Activated CD4-positive, alpha-beta T cell treated with anti-CD3 and anti-CD28 coated beads for 36 hours (primary cell): ENCODE measurements at regions of chr4 and their contacts with region 1.

Region 1: DNA sequence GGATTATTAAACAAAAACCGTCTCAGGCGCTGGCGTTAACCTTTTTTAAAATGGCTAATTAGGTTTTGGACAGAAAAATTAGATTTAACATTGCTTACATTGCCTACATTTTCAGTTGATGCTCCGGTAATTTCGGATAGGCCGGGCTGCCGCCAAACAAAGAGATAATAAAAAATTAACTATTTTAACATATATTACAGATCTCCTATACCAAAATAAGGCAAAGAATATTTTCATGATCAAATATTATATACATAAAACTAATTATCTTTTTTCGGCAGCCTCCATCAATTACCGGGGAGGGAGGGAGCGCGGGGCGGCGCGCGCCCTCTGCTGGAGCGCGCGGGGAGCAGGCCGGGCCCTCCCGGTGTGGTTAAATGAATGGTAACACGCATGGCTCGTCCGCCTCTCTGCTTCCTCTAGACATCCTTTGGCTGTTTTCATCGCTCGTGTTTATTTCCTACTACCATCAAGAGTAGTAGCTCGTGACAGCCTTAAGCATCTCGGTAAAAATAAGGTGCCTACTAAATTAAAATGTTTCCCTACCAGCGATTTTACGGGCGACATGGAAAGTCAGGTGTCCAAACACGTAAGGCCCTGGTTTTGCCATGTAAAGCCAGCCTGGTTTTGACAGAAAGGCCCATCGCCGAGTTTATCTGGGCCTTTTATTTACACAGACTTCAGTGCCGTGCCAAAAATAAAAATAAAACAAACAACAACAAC is 52.4 kb upstream of the TMEM33 start:
- DNase-seq: peak; percentile 75
- ATAC-seq: peak; percentile 95
- H3K4me3 Mint-ChIP-seq: peak overlapping the region; percentile 43
- H3K27ac Mint-ChIP-seq: no peak overlapping the region
- H3K4me1 Mint-ChIP-seq: peaks cover 19% of the 10 kb centered on the region
- H3K27me3 Mint-ChIP-seq: peaks cover 47% of the 10 kb centered on the region

Region 2: DNA sequence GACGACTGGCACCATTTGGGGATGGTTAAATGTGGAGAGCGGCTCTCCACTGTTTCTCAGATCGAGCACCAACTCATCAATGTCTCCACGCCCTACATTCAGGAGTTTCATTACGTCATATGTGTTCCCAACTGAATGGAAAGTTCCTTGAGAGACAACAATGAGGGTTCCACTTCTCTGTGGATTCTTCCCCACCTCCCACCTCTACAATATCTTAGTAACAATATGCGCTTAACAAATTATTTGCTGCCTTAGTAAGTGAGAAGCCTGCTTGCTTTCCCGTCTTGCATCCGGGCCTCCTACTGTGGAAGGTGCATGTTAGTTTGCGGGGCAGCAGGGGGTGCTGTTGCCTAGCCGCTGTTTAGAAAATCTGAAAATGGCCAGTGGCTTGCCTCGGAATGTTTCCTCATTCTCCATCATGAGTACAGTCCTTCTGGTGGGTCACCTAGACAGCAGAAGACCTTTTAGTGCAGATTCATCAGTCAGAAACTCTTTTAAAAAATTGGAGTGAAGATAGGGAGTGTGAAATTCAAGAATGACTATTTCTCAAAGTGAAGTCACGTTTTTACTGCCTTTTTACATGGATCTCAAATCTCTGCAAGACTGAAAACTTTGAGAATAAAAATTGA is 190.0 kb before region 1 on chr4:
- CTCF ChIA-PET with region 1: interaction called, 21 read pairs
- POLR2A ChIA-PET with region 1: no interaction called
- intact Hi-C with region 1: loop called (anchors 1 kb)
- DNase-seq: peak; percentile 67
- ATAC-seq: peak; percentile 58
- H3K4me3 Mint-ChIP-seq: no peak overlapping the region
- H3K27ac Mint-ChIP-seq: no peak overlapping the region
- H3K4me1 Mint-ChIP-seq: no peaks in the 10 kb centered on the region
- H3K27me3 Mint-ChIP-seq: peaks cover 10% of the 10 kb centered on the region

Region 3: GRCh38 chr4:41751449-41752061 is 131.2 kb before region 1 on chr4:
- CTCF ChIA-PET with region 1: no interaction called
- POLR2A ChIA-PET with region 1: no interaction called
- intact Hi-C with region 1: loop called (anchors 1 to 2 kb)
- DNase-seq: peak; percentile 31
- ATAC-seq: no peak
- H3K4me3 Mint-ChIP-seq: no peak overlapping the region
- H3K27ac Mint-ChIP-seq: no peak overlapping the region
- H3K4me1 Mint-ChIP-seq: no peaks in the 10 kb centered on the region
- H3K27me3 Mint-ChIP-seq: peaks cover 70% of the 10 kb centered on the region

Region 4: GRCh38 chr4:41865306-41865980 is 17.3 kb before region 1 on chr4:
- CTCF ChIA-PET with region 1: interaction called, 3 read pairs
- POLR2A ChIA-PET with region 1: no interaction called
- intact Hi-C with region 1: loop called (anchors 1 to 2 kb)
- DNase-seq: no peak
- ATAC-seq: no peak
- H3K4me3 Mint-ChIP-seq: no peak overlapping the region
- H3K27ac Mint-ChIP-seq: no peak overlapping the region
- H3K4me1 Mint-ChIP-seq: peaks cover 16% of the 10 kb centered on the region
- H3K27me3 Mint-ChIP-seq: peaks cover 60% of the 10 kb centered on the region

Region 5: DNA sequence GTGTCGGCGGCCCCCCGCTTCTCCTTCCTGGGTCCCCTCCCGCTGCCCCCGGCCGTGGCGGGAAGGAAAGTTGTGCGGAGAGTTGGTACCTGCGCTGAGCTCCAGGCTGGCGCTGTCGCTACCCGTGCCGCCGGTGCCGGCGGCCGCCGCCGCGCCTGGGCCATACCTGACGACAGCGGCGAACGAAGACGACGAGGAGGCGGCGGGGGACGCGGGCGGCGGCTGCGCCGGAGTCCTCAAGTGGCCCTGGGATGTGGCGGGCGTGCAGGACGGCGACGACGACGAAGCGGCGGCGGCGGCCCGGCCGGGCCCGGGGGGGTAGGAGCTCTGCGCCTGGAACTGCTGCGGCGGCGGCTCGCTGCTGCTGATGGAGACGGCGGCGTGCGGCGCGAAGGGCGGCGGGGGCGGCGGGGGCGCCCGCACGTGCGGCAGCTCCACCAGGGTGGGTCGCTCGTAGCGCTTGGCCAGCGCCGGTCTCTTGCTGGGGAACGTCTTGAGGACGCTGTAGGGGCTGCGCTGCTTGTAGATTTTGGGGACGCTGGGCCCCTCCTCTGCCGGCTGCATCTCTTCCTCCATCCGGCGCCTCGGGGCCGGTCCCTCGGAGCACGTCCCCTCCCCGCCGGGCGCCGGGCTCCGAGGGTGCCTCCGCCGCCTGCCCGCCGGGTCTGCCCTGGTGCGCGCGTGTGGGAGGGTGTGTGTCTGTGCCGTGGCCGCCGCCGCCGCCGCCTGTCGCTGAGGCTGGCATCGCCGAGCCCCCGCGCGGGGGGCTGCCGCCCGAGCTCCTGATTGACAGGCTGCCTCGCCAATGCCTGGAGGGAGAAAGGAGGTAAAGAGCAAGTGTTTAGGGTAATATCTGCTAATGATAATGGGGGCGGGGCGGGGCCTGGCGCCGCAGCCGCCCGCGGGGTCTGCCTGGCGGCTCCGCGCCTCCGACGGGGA is 269.1 kb after region 1 on chr4:
- CTCF ChIA-PET with region 1: no interaction called
- POLR2A ChIA-PET with region 1: no interaction called
- intact Hi-C with region 1: loop called in 1 of 2 experiments (anchors 5 kb)
- DNase-seq: peak; percentile 50
- ATAC-seq: peak; percentile 61
- H3K4me3 Mint-ChIP-seq: peak overlapping the region; percentile 69
- H3K27ac Mint-ChIP-seq: no peak overlapping the region
- H3K4me1 Mint-ChIP-seq: peaks cover 11% of the 10 kb centered on the region
- H3K27me3 Mint-ChIP-seq: peaks cover 48% of the 10 kb centered on the region

Region 6: DNA sequence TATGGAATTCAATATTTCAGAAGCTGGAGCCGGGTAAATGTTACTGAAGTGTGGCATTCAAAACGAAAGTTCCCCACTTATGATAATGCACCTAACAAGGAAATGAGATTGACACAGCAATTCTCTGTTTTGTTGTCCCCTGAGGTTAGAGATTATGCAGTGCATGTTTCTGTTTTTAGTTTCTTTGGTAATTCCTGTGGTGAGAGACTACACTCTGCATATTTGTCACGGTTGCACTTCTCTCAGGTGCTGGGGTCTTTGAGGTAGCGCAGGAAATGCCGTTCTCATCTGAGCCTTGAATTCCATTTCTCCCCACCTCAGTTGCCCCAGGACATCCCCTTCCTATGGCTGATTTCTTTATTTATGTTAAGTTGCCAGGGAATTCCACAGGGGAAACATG is 284.9 kb after region 1 on chr4:
- CTCF ChIA-PET with region 1: no interaction called
- POLR2A ChIA-PET with region 1: no interaction called
- intact Hi-C with region 1: no loop called
- DNase-seq: no peak
- ATAC-seq: peak; percentile 26
- H3K4me3 Mint-ChIP-seq: no peak overlapping the region
- H3K27ac Mint-ChIP-seq: no peak overlapping the region
- H3K4me1 Mint-ChIP-seq: no peaks in the 10 kb centered on the region
- H3K27me3 Mint-ChIP-seq: peaks cover 8% of the 10 kb centered on the region

Region 7: DNA sequence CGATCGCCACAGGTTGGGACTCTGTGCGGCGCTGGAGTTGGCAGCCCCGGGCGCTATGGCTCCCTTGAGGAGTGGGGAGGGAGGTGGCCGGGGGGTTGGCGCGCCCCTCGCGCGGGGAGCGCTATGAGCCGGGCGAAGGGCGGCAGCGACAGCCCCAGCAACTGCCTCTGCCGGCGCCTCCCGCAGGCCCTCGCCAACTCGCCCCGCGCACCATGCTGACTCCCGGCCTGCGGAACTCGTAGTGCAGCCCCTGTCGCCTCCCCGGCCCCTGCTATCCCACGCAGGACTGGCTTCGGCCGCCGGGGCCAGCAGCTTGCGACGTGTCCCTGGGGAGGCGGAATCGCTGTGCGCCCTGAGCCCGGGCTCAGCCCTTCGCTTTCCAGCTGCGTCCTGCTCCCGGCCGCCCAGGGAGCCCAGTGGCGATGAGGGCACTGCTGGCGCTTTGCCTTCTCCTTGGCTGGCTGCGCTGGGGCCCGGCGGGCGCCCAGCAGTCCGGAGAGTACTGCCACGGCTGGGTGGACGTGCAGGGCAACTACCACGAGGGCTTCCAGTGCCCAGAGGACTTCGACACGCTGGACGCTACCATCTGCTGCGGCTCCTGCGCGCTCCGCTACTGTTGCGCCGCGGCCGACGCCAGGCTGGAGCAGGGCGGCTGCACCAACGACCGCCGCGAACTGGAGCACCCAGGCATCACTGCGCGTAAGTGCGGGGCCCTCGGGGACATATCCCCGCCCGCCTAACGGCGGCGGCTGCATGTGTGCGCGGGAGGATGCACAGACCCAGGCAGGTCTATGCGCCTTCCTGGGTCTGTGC is 515.1 kb after region 1 on chr4:
- CTCF ChIA-PET with region 1: no interaction called
- POLR2A ChIA-PET with region 1: no interaction called
- intact Hi-C with region 1: loop called in 1 of 2 experiments (anchors 10 kb)
- DNase-seq: peak; percentile 57
- ATAC-seq: peak; percentile 63
- H3K4me3 Mint-ChIP-seq: peak overlapping the region; percentile 65
- H3K27ac Mint-ChIP-seq: no peak overlapping the region
- H3K4me1 Mint-ChIP-seq: peaks cover 22% of the 10 kb centered on the region
- H3K27me3 Mint-ChIP-seq: peaks cover 58% of the 10 kb centered on the region